ENCODE measurements at regions of chr20 and their contacts with region 1.

Region 1: DNA sequence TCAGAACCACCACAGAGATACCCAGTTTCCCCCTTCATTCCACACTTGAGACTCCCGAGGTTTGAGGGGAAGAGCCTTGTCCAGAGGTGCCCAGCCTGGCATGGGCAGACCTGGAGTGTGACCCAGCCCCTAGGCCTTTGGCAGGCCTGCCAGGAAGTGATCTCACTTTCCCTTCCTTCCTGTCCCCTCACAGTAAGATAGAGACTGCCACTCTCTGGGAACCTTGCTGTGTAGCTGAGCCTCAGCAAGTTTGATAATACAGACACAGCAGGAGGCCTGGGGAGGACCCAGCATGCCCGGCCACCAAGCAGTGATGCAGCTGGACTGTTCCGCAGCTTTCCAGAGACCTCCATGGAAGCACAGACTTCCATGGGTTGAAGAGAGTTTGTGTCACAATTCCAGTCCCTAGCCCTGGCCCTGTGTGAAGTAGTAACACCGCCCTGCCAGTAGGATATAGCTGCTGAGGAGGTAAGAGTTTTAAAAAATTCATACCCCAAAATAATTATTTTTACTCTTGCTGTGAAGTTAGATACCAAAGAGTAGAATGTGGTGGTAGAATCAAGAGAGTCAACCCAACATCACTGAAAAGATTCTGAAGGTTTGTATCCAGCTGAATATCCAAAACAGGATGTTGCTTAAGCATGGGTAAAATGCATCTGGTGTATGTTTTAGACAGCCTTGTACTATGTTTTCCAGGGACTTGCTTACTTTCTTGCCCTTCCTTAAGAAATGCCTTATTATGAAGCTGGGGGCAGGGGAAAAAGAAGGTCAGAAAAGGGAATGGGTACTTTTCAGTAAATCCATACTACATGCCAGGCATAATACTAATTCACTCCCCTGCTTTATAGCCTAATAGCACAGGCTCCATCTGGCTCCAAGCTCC is 16.3 kb downstream of the PKIG start:
- DNase-seq: peak; percentile 37
- ATAC-seq: peak; percentile 82
- H3K4me3 Mint-ChIP-seq: peak overlapping the region; percentile 69
- H3K27ac Mint-ChIP-seq: peak overlapping the region; percentile 86
- H3K4me1 Mint-ChIP-seq: peaks cover 31% of the 10 kb centered on the region
- H3K27me3 Mint-ChIP-seq: no peaks in the 10 kb centered on the region

Region 2: DNA sequence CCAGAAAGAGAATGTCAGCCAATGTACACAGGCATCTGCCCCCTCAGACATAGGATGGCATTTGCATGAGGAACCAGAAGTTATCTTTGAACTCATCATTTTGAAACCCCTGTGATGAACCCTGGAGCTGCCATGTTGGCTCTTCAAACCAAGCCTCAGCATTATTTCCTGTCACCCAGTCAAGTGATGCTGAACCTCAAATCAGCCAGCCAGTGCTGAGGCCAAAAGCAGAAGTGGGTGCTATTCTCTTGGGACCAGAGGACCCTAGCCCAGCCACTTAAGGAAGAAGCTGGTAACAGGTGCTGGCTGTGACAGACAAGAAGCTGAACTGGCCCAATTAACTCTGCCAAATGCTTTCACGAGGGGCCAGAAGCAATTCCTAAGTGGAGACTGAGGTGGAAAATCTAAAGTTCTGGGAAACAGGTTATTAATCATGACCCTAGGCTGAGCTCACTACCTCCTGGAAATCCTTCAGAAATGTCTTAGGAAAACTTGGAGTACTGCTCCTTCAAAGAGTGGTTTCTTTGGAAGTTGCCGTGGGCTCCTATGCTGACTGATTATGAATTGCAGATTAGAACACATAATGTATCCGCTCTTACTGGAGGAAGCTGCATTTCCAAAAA is 12.3 kb before region 1 on chr20:
- CTCF ChIA-PET with region 1: interaction called, 12 read pairs
- POLR2A ChIA-PET with region 1: no interaction called
- DNase-seq: no peak
- ATAC-seq: no peak
- H3K4me3 Mint-ChIP-seq: no peak overlapping the region
- H3K27ac Mint-ChIP-seq: no peak overlapping the region
- H3K4me1 Mint-ChIP-seq: peaks cover 10% of the 10 kb centered on the region
- H3K27me3 Mint-ChIP-seq: peaks cover 2% of the 10 kb centered on the region